ENCODE measurements at regions of chr10 and their contacts with region 1.

Region 1: GRCh38 chr10:63166742-63167258 is 33.7 kb downstream of the NRBF2 start:
- DNase-seq: no peak
- ATAC-seq: peak; percentile 62 to 70

Region 2: GRCh38 chr10:63720072-63720537 is 553.3 kb after region 1 on chr10:
- intact Hi-C with region 1: loop called (anchors 2 to 10 kb)
- DNase-seq: no peak
- ATAC-seq: peak; percentile 28 to 51